Head of caudate nucleus (tissue), 42 donors: ENCODE measurements at regions of chr7 and their contacts with region 1.

Region 1: DNA sequence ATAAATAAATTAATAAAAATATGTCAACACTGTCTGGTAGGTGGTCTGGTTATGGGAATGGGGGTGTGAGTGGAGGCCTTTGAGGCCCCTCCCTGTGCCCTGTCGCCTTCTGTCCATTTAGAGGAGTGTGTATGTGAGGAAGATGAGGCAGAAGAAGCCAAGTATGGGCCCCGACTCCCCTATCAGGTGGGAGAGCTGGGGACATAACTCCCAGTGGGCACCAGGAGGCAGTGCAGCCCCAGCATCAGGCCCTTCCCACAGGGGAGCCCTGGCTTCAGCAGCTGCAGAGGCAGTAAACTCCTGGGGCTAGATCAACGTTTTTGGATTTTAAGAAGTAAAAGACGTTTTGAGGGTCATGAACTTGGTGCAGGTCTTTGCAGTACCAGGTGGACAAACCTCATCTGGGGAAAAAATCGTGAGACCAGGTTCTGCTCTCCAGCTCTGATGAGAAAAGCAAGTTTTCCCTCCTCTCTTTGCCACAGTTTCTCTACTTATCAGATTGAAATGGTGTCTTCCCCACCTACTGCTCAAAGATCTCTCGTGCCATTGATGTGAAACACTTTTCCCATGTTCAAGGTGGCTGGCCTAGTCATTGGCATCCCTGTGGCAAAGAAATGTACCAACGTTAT is 167.8 kb upstream of the EEPD1 start:
- DNase-seq: peak; percentile 74 to 94 (median 86)

Region 2: DNA sequence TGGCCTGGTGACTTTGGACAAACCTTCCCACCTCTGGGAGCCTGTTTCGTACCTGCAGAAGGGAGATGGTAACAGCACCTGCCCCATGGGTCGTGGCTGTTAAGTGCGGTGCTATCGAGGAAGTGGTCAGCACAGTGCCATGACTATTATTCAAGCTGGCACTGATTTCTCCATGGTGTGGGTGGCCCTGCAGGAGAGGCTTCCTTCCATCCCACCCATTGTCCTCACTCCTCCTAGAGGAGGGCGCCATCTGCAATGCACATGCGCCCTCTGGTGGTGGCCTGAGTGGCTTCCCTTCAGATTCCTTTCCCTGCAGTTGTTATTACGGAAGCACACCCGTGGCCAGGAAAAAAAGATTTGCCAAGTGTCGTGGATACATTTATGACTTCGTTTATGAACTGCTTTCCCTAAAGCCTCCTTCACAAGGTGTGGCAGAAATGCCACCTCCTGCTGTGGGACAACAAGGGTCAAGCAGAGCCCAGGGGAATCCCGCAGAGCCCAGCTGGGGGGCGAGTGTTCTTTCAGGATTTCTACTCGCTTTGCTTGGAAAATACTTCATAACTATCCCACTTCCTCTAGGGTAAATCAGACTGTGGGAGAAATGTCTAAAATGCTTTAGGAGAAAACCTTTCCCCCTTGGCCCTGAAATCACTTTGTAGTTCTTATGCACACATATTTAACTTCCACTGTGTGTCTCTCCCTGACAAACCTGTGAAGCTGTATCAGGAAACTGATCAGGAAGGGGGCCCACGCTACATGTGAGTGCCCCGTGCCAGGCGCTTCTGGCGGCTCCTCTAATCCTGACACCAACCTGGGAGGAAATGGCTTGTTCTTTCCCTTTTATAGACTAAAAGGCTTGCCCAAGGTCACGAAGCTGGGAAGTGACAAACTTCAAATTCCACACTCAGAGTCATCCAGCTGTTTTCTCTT is 306.4 kb after region 1 on chr7:
- intact Hi-C with region 1: loop called (anchors 2 kb)
- DNase-seq: peak; percentile 71 to 96 (median 90)

Region 3: GRCh38 chr7:36315309-36316133 is 330.3 kb after region 1 on chr7:
- intact Hi-C with region 1: loop called (anchors 5 kb)
- DNase-seq: peak in 3 of 42 donors; percentile 4 to 11 (median 9)